Naive thymus-derived CD4-positive, alpha-beta T cell (primary cell): ENCODE measurements at regions of chr1 and their contacts with region 1.

Region 1: DNA sequence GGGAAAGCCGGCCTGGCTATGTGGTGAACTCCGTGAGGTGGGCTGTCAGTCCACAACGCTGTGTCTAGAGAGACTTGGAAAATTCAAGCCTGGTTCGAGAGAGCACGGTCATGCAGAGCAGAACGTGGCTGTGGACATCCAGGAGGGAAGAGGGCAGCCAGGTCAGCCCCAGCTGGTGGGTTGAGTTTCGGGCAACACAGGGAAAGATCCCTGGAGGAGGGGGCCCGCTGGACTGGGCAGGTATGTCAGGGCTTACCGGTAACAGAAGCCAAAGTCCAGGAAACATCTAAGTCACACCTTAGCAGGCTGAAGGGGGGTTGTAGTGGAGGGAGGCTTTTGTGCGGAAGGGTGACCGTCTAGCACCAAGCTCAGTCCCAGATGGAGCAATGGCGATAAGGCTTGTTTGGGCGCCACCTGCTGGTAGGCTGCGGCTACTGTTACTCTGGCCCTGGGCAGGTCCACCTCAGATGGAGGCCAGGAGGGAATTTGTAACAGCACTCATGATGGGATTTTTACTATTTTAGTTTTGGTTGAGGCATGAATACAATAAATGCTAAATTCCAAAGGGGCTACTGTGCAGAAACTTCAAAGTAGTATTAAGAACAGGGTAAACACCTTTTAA is 143.3 kb upstream of the ZNF644 start:
- DNase-seq: peak; percentile 5 to 72 (median 42)
- ATAC-seq: peak; percentile 78
- H3K4me3 ChIP-seq: no peak overlapping the region
- H3K4me3 Mint-ChIP-seq: no peak overlapping the region
- H3K27ac ChIP-seq: no peak overlapping the region
- H3K27ac Mint-ChIP-seq: peak overlapping the region in 1 of 9 donors; percentile 49
- H3K4me1 ChIP-seq: no peaks in the 10 kb centered on the region
- H3K4me1 Mint-ChIP-seq: peaks cover 0 to 6% (median 0%) of the 10 kb centered on the region in 7 donors
- H3K27me3 ChIP-seq: no peaks in the 10 kb centered on the region
- H3K27me3 Mint-ChIP-seq: peaks cover 0 to 8% (median 0%) of the 10 kb centered on the region in 5 donors

Region 2: DNA sequence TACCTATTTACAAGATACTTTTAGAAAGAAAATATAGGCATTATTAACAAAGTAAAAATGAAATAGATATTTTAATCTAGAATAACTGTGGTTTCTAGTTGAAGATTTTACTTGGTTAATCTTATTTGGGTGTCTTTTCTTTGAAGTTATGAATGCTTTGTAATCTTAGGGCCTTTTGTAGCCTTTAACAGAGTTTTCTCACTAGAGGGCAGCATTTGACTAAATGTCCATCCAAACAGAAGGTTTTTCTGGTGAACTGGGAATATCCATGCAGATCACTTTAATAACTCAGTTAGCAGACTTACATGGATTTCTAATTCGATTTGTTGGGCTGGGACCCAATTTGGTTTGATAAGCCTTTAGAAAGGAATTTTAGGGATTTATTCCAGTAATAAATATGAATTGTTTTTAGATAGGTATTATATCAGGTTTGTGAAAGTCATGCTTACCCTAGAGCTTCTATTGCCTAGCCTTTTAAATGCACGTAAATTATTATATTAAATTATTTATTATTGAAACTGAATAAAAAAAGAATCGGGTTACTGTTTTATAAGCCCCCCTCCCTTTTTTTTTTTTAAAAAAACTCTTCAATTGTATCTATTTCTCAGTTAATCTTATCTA is 1050.5 kb before region 1 on chr1:
- CTCF ChIA-PET with region 1: interaction called, 3 read pairs
- POLR2A ChIA-PET with region 1: no interaction called
- intact Hi-C with region 1: loop called in 1 of 2 experiments (anchors 10 kb)
- DNase-seq: peak in 3 of 9 donors; percentile 3 to 18 (median 3)
- ATAC-seq: no peak
- H3K4me3 ChIP-seq: no peak overlapping the region
- H3K4me3 Mint-ChIP-seq: no peak overlapping the region
- H3K27ac ChIP-seq: no peak overlapping the region
- H3K27ac Mint-ChIP-seq: no peak overlapping the region
- H3K4me1 ChIP-seq: no peaks in the 10 kb centered on the region
- H3K4me1 Mint-ChIP-seq: no peaks in the 10 kb centered on the region
- H3K27me3 ChIP-seq: peaks cover 0 to 4% of the 10 kb centered on the region in 2 donors
- H3K27me3 Mint-ChIP-seq: peaks cover 26 to 50% (median 31%) of the 10 kb centered on the region in 5 donors

Region 3: DNA sequence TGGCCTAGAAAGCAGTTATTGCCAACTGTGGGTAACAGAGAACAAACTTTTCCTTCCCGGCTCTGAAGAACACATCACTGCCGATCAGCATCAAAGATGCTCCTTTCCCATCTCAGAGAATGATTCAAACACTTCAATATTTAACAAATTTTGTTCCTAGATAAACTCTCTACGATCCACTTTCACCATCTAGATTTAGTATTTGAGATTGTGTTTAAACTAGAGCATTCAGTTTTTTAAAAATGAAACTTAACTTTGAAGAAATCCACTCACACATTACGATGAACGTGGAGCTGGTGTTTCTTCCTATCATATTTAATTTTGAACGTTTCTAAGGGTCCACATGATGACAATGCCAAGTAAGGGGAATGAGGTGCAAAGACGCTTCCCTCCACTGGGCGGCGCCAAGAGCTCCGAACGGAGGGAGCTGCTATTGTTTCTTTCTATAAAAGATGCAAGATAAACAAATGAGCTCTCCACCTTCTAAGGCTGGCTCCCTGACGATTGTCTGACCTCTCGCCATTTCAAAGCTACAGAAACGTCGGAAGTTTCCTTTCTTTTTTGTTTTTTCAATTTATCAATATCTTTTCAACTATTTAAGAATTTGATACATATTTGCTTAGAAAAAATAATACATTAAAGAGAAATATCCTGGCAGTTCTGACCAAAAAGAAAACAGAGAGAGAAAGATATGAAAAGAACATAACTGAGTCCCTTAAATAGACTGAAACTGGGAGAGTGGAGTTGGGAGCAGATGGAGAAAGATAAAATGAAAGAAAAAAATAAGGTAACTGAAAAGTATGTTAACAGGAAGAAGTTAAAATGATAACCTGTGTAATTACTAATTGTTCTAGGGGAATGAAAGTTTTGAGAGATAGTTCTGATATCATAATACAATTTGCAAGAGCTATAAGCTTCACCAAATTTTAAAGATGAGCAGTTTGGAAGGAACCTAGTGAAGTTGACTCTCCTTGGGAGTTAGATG is 443.6 kb before region 1 on chr1:
- CTCF ChIA-PET with region 1: no interaction called
- POLR2A ChIA-PET with region 1: no interaction called
- intact Hi-C with region 1: loop called (anchors 1 kb)
- DNase-seq: peak in 1 of 9 donors; percentile 54
- ATAC-seq: peak; percentile 58
- H3K4me3 ChIP-seq: no peak overlapping the region
- H3K4me3 Mint-ChIP-seq: peak overlapping the region in 8 of 10 donors; percentile 1 to 53 (median 28)
- H3K27ac ChIP-seq: no peak overlapping the region
- H3K27ac Mint-ChIP-seq: peak overlapping the region in 4 of 9 donors; percentile 13 to 65 (median 40)
- H3K4me1 ChIP-seq: peaks cover 5 to 30% of the 10 kb centered on the region in 2 donors
- H3K4me1 Mint-ChIP-seq: peaks cover 23 to 76% (median 61%) of the 10 kb centered on the region in 7 donors
- H3K27me3 ChIP-seq: peaks cover 31 to 85% of the 10 kb centered on the region in 2 donors
- H3K27me3 Mint-ChIP-seq: peaks cover 84 to 91% (median 85%) of the 10 kb centered on the region in 5 donors

Region 4: DNA sequence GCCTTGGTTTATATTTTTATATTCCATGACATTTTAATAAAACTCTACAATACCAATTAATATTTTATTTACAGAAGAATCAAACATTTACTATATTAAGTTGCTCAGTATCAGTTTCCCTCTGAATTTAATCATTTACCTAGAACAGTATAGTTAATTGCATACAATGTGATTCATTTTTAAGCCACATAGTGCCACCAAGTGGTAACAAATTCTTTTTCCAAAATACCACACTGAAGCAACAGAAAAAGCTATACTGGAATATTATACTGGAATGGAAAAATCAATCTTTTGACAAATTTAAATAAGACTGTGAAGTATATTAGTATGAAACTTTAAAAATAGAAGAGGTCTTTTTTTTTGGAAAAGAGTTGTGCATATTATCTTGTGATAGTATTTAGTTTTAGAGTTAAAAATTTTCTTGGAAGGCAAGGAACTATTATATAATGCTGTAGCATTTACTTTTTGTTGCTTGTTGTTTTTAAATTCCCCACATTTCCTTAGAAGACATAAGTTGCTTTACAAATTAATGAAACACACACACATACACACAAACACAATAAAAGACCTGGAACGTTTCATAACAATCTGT is 200.6 kb before region 1 on chr1:
- CTCF ChIA-PET with region 1: no interaction called
- POLR2A ChIA-PET with region 1: no interaction called
- intact Hi-C with region 1: loop called in 1 of 2 experiments (anchors 5 kb)
- DNase-seq: peak in 3 of 9 donors; percentile 4 to 28 (median 9)
- ATAC-seq: peak; percentile 55
- H3K4me3 ChIP-seq: no peak overlapping the region
- H3K4me3 Mint-ChIP-seq: no peak overlapping the region
- H3K27ac ChIP-seq: no peak overlapping the region
- H3K27ac Mint-ChIP-seq: peak overlapping the region in 2 of 9 donors; percentile 22 to 38
- H3K4me1 ChIP-seq: peaks cover 0 to 4% of the 10 kb centered on the region in 2 donors
- H3K4me1 Mint-ChIP-seq: peaks cover 9 to 71% (median 59%) of the 10 kb centered on the region in 7 donors
- H3K27me3 ChIP-seq: no peaks in the 10 kb centered on the region
- H3K27me3 Mint-ChIP-seq: no peaks in the 10 kb centered on the region

Region 5: DNA sequence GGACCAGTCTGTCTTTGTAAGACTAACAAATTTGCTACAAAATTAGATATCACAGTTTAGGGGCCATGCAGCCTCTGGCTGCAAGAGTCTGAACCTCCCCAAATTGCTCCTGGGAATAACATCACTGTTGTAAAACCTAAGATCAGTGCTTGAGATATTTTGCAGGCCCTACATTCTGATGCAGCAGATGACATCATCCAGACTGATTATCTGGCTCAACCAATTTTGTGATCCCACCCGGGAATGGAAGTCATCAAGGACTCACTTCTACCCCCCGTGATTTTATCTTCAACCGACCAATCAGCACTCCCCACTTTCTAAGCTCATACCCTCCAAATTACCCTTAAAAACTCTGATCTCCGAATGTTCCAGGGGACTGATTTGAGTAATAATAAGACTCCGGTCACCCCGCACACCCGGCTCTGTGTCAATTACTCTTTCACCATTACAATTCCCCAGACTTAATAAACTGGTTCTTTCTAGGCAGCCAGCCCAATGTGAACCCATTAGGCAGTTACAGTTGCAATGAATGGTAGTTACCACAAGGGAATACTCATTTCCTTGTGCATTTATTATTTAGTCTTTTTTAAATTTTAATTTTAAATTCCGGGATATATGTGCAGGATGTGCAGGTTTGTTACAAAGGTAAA is 61.5 kb after region 1 on chr1:
- CTCF ChIA-PET with region 1: no interaction called
- POLR2A ChIA-PET with region 1: no interaction called
- intact Hi-C with region 1: no loop called
- DNase-seq: no peak
- ATAC-seq: no peak
- H3K4me3 ChIP-seq: no peak overlapping the region
- H3K4me3 Mint-ChIP-seq: no peak overlapping the region
- H3K27ac ChIP-seq: no peak overlapping the region
- H3K27ac Mint-ChIP-seq: no peak overlapping the region
- H3K4me1 ChIP-seq: no peaks in the 10 kb centered on the region
- H3K4me1 Mint-ChIP-seq: no peaks in the 10 kb centered on the region
- H3K27me3 ChIP-seq: no peaks in the 10 kb centered on the region
- H3K27me3 Mint-ChIP-seq: peaks cover 0 to 9% (median 0%) of the 10 kb centered on the region in 5 donors

Region 6: GRCh38 chr1:91282695-91283420 is 117.7 kb after region 1 on chr1:
- CTCF ChIA-PET with region 1: no interaction called
- POLR2A ChIA-PET with region 1: no interaction called
- intact Hi-C with region 1: loop called in 1 of 2 experiments (anchors 5 kb)
- DNase-seq: peak in 8 of 9 donors; percentile 2 to 34 (median 22)
- ATAC-seq: peak; percentile 60
- H3K4me3 ChIP-seq: no peak overlapping the region
- H3K4me3 Mint-ChIP-seq: no peak overlapping the region
- H3K27ac ChIP-seq: no peak overlapping the region
- H3K27ac Mint-ChIP-seq: no peak overlapping the region
- H3K4me1 ChIP-seq: no peaks in the 10 kb centered on the region
- H3K4me1 Mint-ChIP-seq: no peaks in the 10 kb centered on the region
- H3K27me3 ChIP-seq: no peaks in the 10 kb centered on the region
- H3K27me3 Mint-ChIP-seq: peaks cover 4 to 13% (median 7%) of the 10 kb centered on the region in 5 donors

Region 7: DNA sequence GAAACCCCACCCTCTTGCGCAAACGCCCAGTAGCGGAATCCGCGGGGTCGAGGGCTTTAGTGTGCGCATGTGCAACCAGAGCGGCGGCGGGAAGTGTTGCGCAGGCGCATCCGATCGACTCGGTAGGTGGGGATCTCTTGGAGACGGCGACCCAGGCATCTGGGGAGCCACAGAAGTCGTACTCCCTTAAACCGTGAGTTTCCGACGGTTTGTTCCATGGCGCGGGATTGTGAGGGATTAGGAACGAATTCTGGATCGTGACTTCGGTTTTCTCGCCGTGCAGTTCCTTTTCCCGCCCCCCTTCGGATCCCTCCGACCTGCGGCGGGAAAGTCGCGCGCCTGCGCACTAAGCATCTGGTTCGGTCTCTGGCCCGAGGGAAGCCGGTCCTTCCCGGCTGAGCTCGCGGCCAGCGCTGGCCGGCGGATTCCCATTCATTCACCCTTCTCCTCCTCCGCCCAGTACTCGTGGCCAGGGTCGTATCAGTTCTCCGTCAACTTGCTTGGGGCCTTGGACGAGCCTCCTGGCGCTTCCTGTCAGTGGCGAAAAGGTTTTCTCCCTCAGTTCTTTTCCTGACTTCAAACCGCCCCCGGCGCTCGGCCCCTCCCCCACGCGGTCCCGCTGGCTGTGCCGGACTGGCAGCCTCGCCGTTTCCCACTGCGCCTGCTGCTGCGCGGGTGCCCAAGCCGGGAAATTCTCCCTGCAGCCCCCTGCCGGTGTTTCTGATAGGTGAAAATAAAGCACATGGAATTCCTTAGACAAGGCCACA is 335.8 kb after region 1 on chr1 and contains the start of gene CDC7:
- CTCF ChIA-PET with region 1: no interaction called
- POLR2A ChIA-PET with region 1: no interaction called
- intact Hi-C with region 1: loop called in 1 of 2 experiments (anchors 5 kb)
- DNase-seq: peak; percentile 67 to 86 (median 79)
- ATAC-seq: peak; percentile 85
- H3K4me3 ChIP-seq: peak within 1 kb of the TSS; percentile 97
- H3K4me3 Mint-ChIP-seq: no peak within 1 kb of the TSS
- H3K27ac ChIP-seq: peak within 1 kb of the TSS; percentile 85
- H3K27ac Mint-ChIP-seq: no peak within 1 kb of the TSS
- H3K4me1 ChIP-seq: peaks cover 0 to 11% of the 10 kb centered on the region in 2 donors
- H3K4me1 Mint-ChIP-seq: peaks cover 14 to 34% (median 18%) of the 10 kb centered on the region in 7 donors
- H3K27me3 ChIP-seq: no peaks in the 10 kb centered on the region
- H3K27me3 Mint-ChIP-seq: no peaks in the 10 kb centered on the region
- total RNA-seq, gene CDC7: 5.3 to 17.9 (median 5.9) TPM

Region 8: DNA sequence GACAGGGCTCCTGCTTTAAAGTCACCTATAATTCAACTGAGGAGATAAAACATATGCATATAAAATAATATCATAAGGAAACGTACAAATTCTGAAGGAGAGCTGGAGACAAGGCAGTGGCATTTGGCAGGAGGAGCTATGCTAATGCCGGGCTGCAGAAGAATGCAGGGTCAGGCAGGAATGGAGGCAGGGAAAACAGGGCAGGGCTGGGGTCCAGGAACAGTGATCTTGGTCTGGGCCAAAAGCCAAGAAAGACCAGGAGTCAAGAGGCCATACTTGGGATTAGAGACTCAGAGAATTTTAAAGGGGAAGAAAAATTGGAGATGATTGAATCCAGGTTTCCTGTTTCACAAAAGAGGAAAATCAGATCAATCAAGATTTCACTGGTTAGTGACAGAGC is 764.1 kb after region 1 on chr1:
- CTCF ChIA-PET with region 1: interaction called, 4 read pairs
- POLR2A ChIA-PET with region 1: no interaction called
- intact Hi-C with region 1: loop called in 1 of 2 experiments (anchors 5 kb)
- DNase-seq: no peak
- ATAC-seq: no peak
- H3K4me3 ChIP-seq: no peak overlapping the region
- H3K4me3 Mint-ChIP-seq: no peak overlapping the region
- H3K27ac ChIP-seq: no peak overlapping the region
- H3K27ac Mint-ChIP-seq: no peak overlapping the region
- H3K4me1 ChIP-seq: peaks cover 0 to 3% of the 10 kb centered on the region in 2 donors
- H3K4me1 Mint-ChIP-seq: peaks cover 0 to 5% (median 0%) of the 10 kb centered on the region in 7 donors
- H3K27me3 ChIP-seq: no peaks in the 10 kb centered on the region
- H3K27me3 Mint-ChIP-seq: no peaks in the 10 kb centered on the region